GM12878 (cell line): ENCODE measurements at regions of chr2 and their contacts with region 1.

Region 1: DNA sequence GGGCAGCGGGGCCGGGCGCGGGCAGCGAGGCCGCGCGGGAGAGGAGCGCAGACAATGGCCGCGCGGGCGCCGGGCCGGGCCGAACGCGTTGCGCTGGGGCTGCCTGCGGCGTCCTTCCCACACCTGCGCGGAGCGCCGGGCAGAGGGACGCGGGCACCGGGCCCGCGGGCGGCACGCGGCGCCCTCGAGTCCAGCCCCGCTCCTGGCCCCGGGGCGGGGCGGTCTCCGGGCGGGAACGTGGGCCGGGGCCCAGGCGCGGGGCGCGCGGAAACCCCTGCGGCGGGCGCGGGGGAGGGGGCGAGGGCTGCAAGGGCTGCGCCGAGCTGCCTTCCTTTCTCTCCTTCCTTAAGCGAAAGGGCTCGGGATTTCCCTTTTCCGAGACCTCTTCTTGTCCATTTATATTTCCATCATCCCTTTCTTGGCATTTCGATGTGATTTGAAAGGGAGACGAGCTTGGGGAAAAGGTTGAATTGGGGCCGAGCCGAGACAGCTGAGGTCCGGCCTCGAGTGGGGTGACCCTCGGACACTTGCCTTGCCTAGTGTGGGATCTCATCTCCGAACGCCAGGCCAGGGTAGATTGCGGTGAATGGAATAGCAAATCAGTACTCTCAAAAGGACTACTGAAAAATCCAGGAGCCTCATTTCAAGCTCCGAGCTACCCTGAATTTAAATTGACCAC is 676 bp downstream of the KLHL23 start:
- DNase-seq: no peak
- ATAC-seq: peak; percentile 20
- H3K4me3 ChIP-seq: peak overlapping the region; percentile 96
- H3K27ac ChIP-seq: 0 out of 2 replicates have a peak overlapping the region, but pooled peaks have one; percentile 18
- H3K4me1 ChIP-seq: peaks cover 8% of the 10 kb centered on the region
- H3K27me3 ChIP-seq: no peaks in the 10 kb centered on the region
- CTCF ChIP-seq: no peak
- EP300 ChIP-seq: no peak
- POLR2A ChIP-seq: no peak
- RAD21 ChIP-seq: no peak

Region 2: DNA sequence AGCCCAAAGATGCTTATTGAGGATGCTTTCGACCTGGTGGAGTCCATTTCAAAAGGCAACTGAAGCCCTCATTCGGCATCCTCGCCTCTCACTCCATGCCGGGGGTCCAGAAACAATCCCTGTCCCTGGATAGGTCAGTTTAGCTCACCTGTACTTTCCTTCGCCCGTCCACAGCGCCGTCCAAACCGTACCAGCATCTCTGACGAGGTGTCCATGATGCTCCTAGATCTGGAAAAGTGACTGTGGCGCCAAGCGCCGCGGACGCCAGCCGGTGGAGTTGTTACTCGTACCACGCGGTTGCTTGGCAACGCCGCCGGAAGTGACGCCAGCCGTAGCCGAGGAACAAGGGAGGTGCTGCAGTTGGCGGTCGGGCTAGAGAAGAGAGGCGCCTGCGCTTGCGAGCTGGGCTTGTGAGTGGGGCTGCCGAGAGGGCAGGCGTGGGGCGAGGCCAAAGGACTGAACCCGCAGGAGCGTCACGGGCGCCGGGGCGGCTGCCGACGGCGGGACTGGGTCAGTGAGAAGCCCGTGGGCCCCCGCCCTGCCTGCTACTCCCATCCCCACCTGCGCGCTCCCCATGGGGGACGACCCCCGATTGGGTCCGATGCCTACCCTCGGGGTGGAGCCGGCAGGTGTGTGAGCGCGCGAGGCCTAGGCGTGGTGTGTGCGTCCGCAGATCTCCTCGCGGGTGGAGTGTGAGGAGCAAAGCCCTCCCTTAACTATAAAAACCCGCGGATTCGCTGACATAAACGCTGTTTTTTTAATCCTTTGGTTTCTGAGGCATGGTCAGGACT is 40.0 kb before region 1 on chr2 and contains the starts of genes CFAP210 and PHOSPHO2:
- CTCF ChIA-PET with region 1: interaction called, 3 read pairs
- POLR2A ChIA-PET with region 1: interaction called, 5 read pairs
- RAD21 ChIA-PET with region 1: interaction called, 3 read pairs
- SMC1A ChIA-PET with region 1: interaction called, 19 read pairs
- in situ Hi-C with region 1: no loop called
- intact Hi-C with region 1: loop called (anchors 2 kb)
- DNase-seq: peak; percentile 70
- ATAC-seq: peak; percentile 99
- H3K4me3 ChIP-seq: peak within 1 kb of the TSS; percentile 81
- H3K27ac ChIP-seq: peak within 1 kb of the TSS; percentile 74
- H3K4me1 ChIP-seq: no peaks in the 10 kb centered on the region
- H3K27me3 ChIP-seq: 0 out of 4 replicates have a peak, but pooled peaks cover 0 to 5% of the 10 kb centered on the region in 2 experiments
- CTCF ChIP-seq: no peak
- EP300 ChIP-seq: peak in 1 of 2 experiments; percentile 42; a peak in 1 of 4 replicates
- POLR2A ChIP-seq: peak; percentile 93
- RAD21 ChIP-seq: no peak
- polyA plus RNA-seq, gene CFAP210: not detected
- polyA plus RNA-seq, gene PHOSPHO2: 2.7 to 3.0 TPM

Region 3: GRCh38 chr2:169718930-169719504 is 15.3 kb before region 1 on chr2:
- CTCF ChIA-PET with region 1: no interaction called
- POLR2A ChIA-PET with region 1: no interaction called
- RAD21 ChIA-PET with region 1: no interaction called
- SMC1A ChIA-PET with region 1: no interaction called
- in situ Hi-C with region 1: no loop called
- intact Hi-C with region 1: no loop called
- DNase-seq: no peak
- ATAC-seq: peak; percentile 61
- H3K4me3 ChIP-seq: no peak overlapping the region
- H3K27ac ChIP-seq: no peak overlapping the region
- H3K4me1 ChIP-seq: no peaks in the 10 kb centered on the region; the same call in 1 of the 2 replicates
- H3K27me3 ChIP-seq: no peaks in the 10 kb centered on the region
- CTCF ChIP-seq: no peak
- EP300 ChIP-seq: no peak
- POLR2A ChIP-seq: no peak
- RAD21 ChIP-seq: no peak

Region 4: DNA sequence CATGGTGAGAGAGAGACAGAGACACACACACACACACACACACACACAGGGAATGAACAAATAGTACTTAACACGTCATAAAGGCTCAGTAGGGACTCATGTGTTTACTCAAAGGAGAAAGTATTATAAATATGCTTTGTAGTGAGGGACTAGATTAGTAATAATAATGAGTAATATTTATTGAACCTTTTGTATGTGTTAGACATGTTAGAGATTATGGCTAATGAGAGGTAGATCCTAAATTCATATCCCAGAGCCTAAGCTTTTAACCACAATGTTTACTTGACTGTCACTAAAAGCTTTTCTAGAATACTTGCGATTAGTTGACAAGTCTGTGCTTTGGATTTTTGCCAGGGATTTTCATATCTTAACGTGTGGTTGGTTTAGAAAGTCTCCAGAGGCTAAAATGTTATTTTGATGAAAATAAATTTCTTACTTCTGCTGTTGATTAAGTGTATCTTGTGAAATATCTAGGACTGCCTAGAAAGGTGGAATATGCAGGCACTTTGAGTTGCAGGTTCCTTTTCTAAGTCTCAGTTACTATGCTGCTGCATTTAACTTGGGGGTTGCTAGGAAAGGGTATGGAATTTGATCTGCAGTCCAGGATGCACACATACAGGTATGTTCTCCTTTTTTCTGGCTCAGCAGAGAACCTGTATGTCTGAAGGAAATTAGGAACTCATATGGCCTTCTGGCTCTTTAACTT is 157.4 kb after region 1 on chr2:
- CTCF ChIA-PET with region 1: no interaction called
- POLR2A ChIA-PET with region 1: no interaction called
- RAD21 ChIA-PET with region 1: no interaction called
- SMC1A ChIA-PET with region 1: no interaction called
- in situ Hi-C with region 1: no loop called
- intact Hi-C with region 1: no loop called
- DNase-seq: no peak
- ATAC-seq: no peak
- H3K4me3 ChIP-seq: no peak overlapping the region
- H3K27ac ChIP-seq: no peak overlapping the region
- H3K4me1 ChIP-seq: no peaks in the 10 kb centered on the region
- H3K27me3 ChIP-seq: no peaks in the 10 kb centered on the region
- CTCF ChIP-seq: no peak
- EP300 ChIP-seq: no peak
- POLR2A ChIP-seq: no peak
- RAD21 ChIP-seq: no peak